ENCODE measurements at regions of chr2 and their contacts with region 1.

Region 1: DNA sequence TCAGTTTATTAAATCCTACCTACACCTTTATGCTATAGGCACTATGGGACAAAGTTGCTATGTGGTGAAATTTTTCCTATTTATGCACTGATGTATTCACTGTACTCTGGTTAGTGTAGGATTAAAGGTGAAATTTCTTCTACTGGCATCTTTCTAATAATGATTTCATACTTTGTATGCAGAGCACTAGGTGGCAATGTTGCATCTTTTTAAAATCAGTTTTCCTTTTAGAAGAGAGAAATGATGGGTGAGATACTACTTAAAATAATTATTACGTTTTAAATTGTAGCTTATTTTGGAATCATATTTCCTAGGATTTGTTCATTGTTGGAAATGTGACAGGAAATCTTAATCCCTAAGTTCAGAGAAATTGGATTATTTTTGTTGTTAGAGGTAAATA is 150.9 kb downstream of the CD8B2 start:
- DNase-seq: no peak
- H3K4me3 ChIP-seq: no peak overlapping the region
- H3K27ac ChIP-seq: no peak overlapping the region
- H3K4me1 ChIP-seq: no peaks in the 10 kb centered on the region
- H3K27me3 ChIP-seq: no peaks in the 10 kb centered on the region
- CTCF ChIP-seq: peak; percentile 37 to 52 (median 41)
- EP300 ChIP-seq: no peak
- POLR2A ChIP-seq: no peak

Region 2: GRCh38 chr2:105969555-105969954 is 668.5 kb before region 1 on chr2:
- intact Hi-C with region 1: no loop called
- DNase-seq: no peak
- H3K4me3 ChIP-seq: no peak overlapping the region
- H3K27ac ChIP-seq: no peak overlapping the region
- H3K4me1 ChIP-seq: no peaks in the 10 kb centered on the region
- H3K27me3 ChIP-seq: no peaks in the 10 kb centered on the region
- CTCF ChIP-seq: no peak
- EP300 ChIP-seq: no peak
- POLR2A ChIP-seq: no peak

Region 3: GRCh38 chr2:106516436-106516835 is 121.6 kb before region 1 on chr2:
- intact Hi-C with region 1: no loop called
- DNase-seq: no peak
- H3K4me3 ChIP-seq: no peak overlapping the region
- H3K27ac ChIP-seq: no peak overlapping the region
- H3K4me1 ChIP-seq: peaks cover 0 to 8% (median 3%) of the 10 kb centered on the region in 4 donors
- H3K27me3 ChIP-seq: no peaks in the 10 kb centered on the region
- CTCF ChIP-seq: no peak
- EP300 ChIP-seq: no peak
- POLR2A ChIP-seq: no peak

Region 4: GRCh38 chr2:107669335-107669734 is 1031.3 kb after region 1 on chr2:
- intact Hi-C with region 1: loop called (anchors 5 kb)
- DNase-seq: no peak
- H3K4me3 ChIP-seq: no peak overlapping the region
- H3K27ac ChIP-seq: no peak overlapping the region
- H3K4me1 ChIP-seq: no peaks in the 10 kb centered on the region
- H3K27me3 ChIP-seq: no peaks in the 10 kb centered on the region
- CTCF ChIP-seq: no peak
- EP300 ChIP-seq: no peak
- POLR2A ChIP-seq: no peak

Region 5: DNA sequence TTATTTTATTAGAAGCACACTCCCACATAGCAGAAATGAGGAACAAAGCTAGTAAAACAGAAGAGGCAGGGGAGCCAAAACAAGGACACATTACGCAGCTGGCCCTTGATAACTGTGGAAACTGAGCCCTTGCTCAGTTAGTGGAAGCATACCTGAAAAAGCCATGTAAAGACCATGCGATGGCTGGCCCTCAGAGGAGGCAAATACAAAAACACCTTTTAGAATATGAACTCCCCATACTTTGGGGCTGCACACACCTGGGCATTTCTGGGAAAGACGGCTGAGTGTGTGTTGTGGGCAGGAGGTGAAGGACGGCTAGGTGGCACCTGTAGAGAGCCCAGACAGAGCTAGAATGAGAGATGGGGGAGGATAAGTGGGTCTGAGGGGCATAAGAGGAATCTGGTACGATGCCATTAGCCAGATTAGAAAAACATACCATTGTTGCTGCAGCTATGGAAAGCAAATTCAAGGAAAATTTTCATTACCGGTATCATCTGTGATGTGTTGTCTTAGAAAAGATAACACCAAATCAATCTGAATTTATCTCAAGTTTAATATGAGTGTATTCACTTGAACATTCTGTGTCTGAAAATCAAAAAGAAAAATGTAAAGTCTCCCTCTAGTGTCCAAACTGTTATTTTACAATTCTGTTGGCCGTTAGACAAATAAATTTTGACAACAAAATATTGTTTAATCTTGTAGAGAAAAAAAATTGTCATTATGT is 1556.5 kb after region 1 on chr2:
- intact Hi-C with region 1: loop called (anchors 5 kb)
- DNase-seq: no peak
- H3K4me3 ChIP-seq: no peak overlapping the region
- H3K27ac ChIP-seq: no peak overlapping the region
- H3K4me1 ChIP-seq: no peaks in the 10 kb centered on the region
- H3K27me3 ChIP-seq: no peaks in the 10 kb centered on the region
- CTCF ChIP-seq: peak in 2 of 3 experiments; percentile 39 to 42
- EP300 ChIP-seq: no peak
- POLR2A ChIP-seq: no peak

Measured in esophagus muscularis mucosa (tissue), 4 donors.